Activated CD4-positive, alpha-beta T cell treated with anti-CD3 and anti-CD28 coated beads for 36 hours (primary cell): ENCODE measurements at regions of chr7 and their contacts with region 1.

Region 1: GRCh38 chr7:23597094-23598091 is at the start of gene CCDC126:
- DNase-seq: peak; percentile 91
- ATAC-seq: peak; percentile 57
- H3K4me3 Mint-ChIP-seq: peak within 1 kb of the TSS; percentile 81
- H3K27ac Mint-ChIP-seq: peak within 1 kb of the TSS; percentile 81
- H3K4me1 Mint-ChIP-seq: peaks cover 61% of the 10 kb centered on the region
- H3K27me3 Mint-ChIP-seq: peaks cover 5% of the 10 kb centered on the region
- total RNA-seq, gene CCDC126: 4.6 to 5.6 TPM

Region 2: DNA sequence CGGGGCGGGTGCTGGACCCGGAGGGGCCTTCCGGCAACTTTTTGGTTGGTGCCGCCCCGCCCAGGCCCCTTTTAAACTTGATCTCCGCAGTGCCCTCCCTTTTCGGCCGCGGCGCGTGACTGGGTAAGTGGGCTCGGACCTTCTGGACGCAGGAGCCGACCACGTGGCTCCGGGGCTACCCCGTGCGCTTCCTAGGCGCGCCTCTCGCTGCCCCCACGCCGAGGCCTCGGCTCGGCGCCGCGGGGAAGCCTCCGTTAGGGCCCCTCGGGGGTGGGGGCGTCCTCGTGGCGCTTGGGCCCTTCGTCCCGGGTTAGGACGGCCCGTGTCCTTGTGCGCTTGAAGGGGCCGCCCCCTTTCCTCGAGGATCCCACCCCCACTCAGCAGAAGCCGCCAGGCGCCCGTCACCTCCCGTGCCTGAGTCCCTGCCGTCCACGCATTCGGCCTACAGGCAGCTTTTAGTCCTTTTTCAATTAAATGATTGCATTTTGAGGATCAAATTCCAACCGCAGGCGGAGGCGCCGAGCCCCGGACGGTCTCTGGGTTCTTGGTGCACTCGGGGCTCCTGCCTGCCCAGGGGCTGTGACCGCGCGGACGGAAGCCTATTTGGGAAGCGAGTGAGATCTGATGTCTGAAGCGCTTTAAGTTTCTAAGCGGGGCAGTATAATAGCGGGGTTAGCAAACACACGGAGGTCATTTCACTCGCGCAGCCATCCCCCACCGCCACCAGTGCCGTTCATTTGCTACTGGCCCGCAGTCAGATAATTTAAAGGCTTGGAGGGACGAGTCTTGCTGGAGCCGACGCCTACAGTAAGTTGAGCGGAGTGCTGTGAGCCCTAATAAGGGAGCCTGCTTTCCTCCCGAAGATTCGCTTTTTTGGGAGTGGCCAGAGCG is 743.0 kb before region 1 on chr7:
- CTCF ChIA-PET with region 1: no interaction called
- POLR2A ChIA-PET with region 1: no interaction called
- intact Hi-C with region 1: loop called in 1 of 2 experiments (anchors 10 kb)
- DNase-seq: peak; percentile 89
- ATAC-seq: peak; percentile 74
- H3K4me3 Mint-ChIP-seq: peak overlapping the region; percentile 92
- H3K27ac Mint-ChIP-seq: peak overlapping the region; percentile 92
- H3K4me1 Mint-ChIP-seq: peaks cover 34% of the 10 kb centered on the region
- H3K27me3 Mint-ChIP-seq: peaks cover 2% of the 10 kb centered on the region

Region 3: GRCh38 chr7:23357190-23358093 is 240.0 kb before region 1 on chr7:
- CTCF ChIA-PET with region 1: no interaction called
- POLR2A ChIA-PET with region 1: no interaction called
- intact Hi-C with region 1: loop called (anchors 1 to 5 kb)
- DNase-seq: no peak
- ATAC-seq: peak; percentile 42
- H3K4me3 Mint-ChIP-seq: no peak overlapping the region
- H3K27ac Mint-ChIP-seq: no peak overlapping the region
- H3K4me1 Mint-ChIP-seq: peaks cover 18% of the 10 kb centered on the region
- H3K27me3 Mint-ChIP-seq: peaks cover 7% of the 10 kb centered on the region

Region 4: DNA sequence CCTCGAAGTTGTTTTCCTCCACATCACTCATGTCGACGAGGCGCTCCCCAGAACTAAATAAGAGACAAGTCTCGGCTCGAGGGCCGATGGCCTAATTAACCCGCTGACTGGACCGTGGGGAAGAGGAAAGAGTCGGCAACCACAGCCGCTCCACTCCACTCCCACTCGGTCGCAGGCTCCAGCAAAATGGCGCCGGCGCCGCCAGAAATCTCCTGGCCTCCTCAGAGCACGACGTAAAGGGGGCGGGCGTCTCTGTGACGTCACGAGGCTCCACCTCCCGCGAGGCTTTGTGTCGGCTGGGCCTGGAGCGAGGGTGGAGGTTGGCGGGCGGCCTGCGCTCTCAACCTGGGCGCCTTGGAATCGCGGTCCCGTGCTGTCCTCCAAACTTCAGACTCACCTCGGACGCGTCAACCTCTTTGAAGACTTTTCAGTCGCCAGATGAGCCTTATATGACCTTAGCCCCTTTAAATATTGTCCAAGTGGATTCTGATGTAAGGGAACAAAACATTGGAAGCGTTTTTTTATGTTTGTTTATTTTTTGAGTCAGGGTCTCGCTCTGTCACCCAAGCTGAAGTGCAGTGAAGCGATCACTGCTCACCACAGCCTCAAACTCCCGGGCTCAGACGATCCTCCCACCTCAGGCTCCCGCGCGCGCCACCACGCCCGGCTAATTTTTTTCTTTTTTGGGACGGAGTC is 65.5 kb before region 1 on chr7 and contains the start of gene TRA2A:
- CTCF ChIA-PET with region 1: interaction called, 3 read pairs
- POLR2A ChIA-PET with region 1: no interaction called
- intact Hi-C with region 1: loop called (anchors 1 to 2 kb)
- DNase-seq: peak; percentile 98
- ATAC-seq: peak; percentile 93
- H3K4me3 Mint-ChIP-seq: peak within 1 kb of the TSS; percentile 96
- H3K27ac Mint-ChIP-seq: peak within 1 kb of the TSS; percentile 100
- H3K4me1 Mint-ChIP-seq: peaks cover 41% of the 10 kb centered on the region
- H3K27me3 Mint-ChIP-seq: no peaks in the 10 kb centered on the region
- total RNA-seq, gene TRA2A: 86.8 to 143 TPM

Region 5: DNA sequence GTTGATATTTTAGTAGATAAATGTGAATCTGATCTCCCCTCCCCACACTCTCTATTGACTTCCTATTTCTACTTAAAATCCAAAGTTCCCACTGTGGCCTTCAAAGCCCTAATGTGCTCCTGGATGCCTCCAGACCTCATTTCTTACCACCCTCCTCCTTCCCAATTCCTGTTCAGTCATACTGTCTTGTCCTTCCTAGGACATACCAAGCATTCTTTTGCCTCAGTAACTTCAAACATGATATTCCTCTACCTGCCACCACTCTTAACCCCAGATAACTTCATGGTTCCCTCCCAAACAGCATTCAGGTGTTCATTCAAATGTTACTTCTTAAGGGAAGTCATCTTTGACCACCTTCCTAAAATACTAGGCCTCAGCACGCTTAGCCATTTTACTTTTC is 48.4 kb after region 1 on chr7:
- CTCF ChIA-PET with region 1: no interaction called
- POLR2A ChIA-PET with region 1: no interaction called
- intact Hi-C with region 1: no loop called
- DNase-seq: no peak
- ATAC-seq: no peak
- H3K4me3 Mint-ChIP-seq: no peak overlapping the region
- H3K27ac Mint-ChIP-seq: no peak overlapping the region
- H3K4me1 Mint-ChIP-seq: no peaks in the 10 kb centered on the region
- H3K27me3 Mint-ChIP-seq: no peaks in the 10 kb centered on the region

Region 6: DNA sequence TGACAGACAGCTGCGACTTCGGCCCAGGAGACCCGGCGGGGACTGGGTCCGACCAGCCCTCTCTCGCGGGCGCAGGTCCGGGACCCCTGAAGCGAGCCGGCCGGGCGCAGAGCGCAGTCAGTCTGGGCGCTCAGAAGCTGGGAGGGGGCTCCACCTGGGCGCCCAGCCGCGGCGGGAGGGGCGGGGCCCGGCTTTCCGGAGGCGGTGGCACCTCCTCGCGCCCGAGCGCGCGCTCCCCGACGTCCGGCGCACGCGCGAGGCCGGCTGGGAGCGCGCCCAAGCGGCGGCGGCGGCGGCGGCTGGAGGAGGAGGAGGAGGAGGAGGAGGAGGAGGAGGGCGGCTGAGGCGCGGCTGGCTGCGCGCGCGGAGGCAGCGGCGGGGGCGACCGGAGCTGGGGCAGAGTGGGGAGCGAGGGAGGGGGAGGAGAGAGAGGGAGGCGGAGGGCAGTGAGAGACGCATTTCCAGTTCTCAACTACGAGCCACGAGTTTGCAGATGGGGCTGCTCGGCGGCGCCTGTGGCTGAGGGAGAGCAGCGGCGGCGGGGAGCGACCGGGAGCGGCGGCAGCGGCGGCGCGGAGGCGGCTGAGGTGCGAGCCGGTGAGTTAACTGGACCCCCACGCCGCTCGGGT is 975.7 kb after region 1 on chr7 and contains the start of gene PALS2:
- CTCF ChIA-PET with region 1: no interaction called
- POLR2A ChIA-PET with region 1: no interaction called
- intact Hi-C with region 1: loop called in 1 of 2 experiments (anchors 5 kb)
- DNase-seq: peak; percentile 86
- ATAC-seq: peak; percentile 68
- H3K4me3 Mint-ChIP-seq: peak within 1 kb of the TSS; percentile 88
- H3K27ac Mint-ChIP-seq: peak within 1 kb of the TSS; percentile 86
- H3K4me1 Mint-ChIP-seq: peaks cover 34% of the 10 kb centered on the region
- H3K27me3 Mint-ChIP-seq: peaks cover 12% of the 10 kb centered on the region
- total RNA-seq, gene PALS2: 20.8 to 41.7 TPM

Region 7: GRCh38 chr7:25117226-25118047 is 1520.0 kb after region 1 on chr7:
- CTCF ChIA-PET with region 1: no interaction called
- POLR2A ChIA-PET with region 1: no interaction called
- intact Hi-C with region 1: loop called in 1 of 2 experiments (anchors 2 kb)
- DNase-seq: no peak
- ATAC-seq: peak; percentile 86
- H3K4me3 Mint-ChIP-seq: peak overlapping the region; percentile 12
- H3K27ac Mint-ChIP-seq: peak overlapping the region; percentile 43
- H3K4me1 Mint-ChIP-seq: peaks cover 53% of the 10 kb centered on the region
- H3K27me3 Mint-ChIP-seq: no peaks in the 10 kb centered on the region